ENCODE measurements at regions of chr16 and their contacts with region 1.

Region 1: GRCh38 chr16:56657555-56658326 is at the start of gene MT1F:
- DNase-seq: peak; percentile 71
- ATAC-seq: peak; percentile 74
- H3K4me3 ChIP-seq: peak within 1 kb of the TSS; percentile 26 to 79 (median 70)
- H3K4me3 Mint-ChIP-seq: peak within 1 kb of the TSS; percentile 99
- H3K27ac ChIP-seq: no peak within 1 kb of the TSS
- H3K27ac Mint-ChIP-seq: peak within 1 kb of the TSS; percentile 90
- H3K4me1 ChIP-seq: peaks cover 16 to 32% of the 10 kb centered on the region in 2 donors
- H3K4me1 Mint-ChIP-seq: peaks cover 29% of the 10 kb centered on the region
- H3K27me3 ChIP-seq: peaks cover 0 to 12% (median 4%) of the 10 kb centered on the region in 4 experiments
- H3K27me3 Mint-ChIP-seq: peaks cover 26% of the 10 kb centered on the region
- CTCF ChIP-seq: no peak
- total RNA-seq, gene MT1F: 4.3 and 7.6 TPM in 2 replicates

Region 2: GRCh38 chr16:56643080-56643778 is 14.5 kb before region 1 on chr16:
- CTCF ChIA-PET with region 1: interaction called, 8 read pairs
- POLR2A ChIA-PET with region 1: no interaction called
- intact Hi-C with region 1: loop called (anchors 1 kb)
- DNase-seq: peak; percentile 57
- ATAC-seq: peak; percentile 100
- H3K4me3 ChIP-seq: peak overlapping the region in 3 of 5 experiments; percentile 17 to 33 (median 33)
- H3K4me3 Mint-ChIP-seq: peak overlapping the region; percentile 67
- H3K27ac ChIP-seq: no peak overlapping the region
- H3K27ac Mint-ChIP-seq: peak overlapping the region; percentile 6
- H3K4me1 ChIP-seq: peaks cover 18 to 21% of the 10 kb centered on the region in 2 donors
- H3K4me1 Mint-ChIP-seq: peaks cover 17% of the 10 kb centered on the region
- H3K27me3 ChIP-seq: peaks cover 0 to 68% (median 25%) of the 10 kb centered on the region in 4 experiments
- H3K27me3 Mint-ChIP-seq: peaks cover 70% of the 10 kb centered on the region
- CTCF ChIP-seq: no peak

Measured in B cell (primary cell).